AG04449 (cell line): ENCODE measurements at regions of chr20 and their contacts with region 1.

Region 1: DNA sequence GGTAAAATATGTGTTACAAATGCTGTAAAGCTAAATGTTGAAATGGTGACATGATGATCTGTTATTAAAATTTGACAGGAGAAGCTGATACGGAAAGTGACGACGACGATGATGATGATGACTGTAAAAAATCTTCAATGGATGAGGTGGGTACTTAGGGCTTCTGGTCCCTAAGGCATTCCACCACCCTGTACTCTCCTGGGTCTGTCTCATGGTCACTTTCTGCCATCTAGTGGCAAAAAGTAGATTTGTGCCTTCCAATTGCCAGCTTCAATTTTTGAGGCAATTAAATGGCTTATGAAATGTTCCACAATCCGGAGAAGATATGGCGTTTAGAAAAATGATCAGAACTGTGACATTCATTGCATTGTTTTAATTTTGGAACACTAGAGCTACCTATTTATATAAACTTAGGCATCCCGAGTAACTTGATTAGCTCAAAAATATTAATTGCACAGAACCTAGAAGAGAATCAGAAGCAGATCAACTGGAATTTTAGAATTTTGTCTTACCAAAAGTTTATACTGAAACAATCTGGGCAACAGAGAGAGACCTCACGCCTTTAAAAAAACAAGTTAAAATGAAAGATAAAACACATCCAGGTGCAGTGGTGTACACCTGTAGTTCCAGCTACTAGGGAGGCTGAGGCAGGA is 346.5 kb upstream of the PLCB4 start:
- DNase-seq: no peak
- H3K4me3 ChIP-seq: no peak overlapping the region
- CTCF ChIP-seq: peak; percentile 64

Region 2: DNA sequence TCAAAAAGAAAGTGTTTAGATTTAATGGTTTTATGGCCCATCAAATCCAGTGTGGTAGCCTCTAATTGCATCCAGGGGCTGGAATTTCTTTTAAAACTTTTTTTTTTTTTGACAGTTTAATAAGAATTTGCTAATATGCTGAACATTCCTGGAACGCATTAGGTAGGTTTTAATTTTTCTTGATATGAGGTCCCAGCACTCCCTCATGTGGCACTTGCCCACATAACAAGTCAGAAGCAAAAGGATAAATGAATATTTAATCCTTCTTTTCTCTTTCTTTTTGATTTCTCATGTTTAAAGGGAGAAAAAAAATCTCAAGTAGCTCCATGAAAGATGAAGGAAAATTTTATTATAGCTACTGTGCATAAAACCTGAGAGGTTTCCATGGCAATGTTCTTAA is 795.6 kb before region 1 on chr20:
- CTCF ChIA-PET with region 1: interaction called, 290 read pairs
- POLR2A ChIA-PET with region 1: no interaction called
- DNase-seq: peak; percentile 10
- H3K4me3 ChIP-seq: no peak overlapping the region
- CTCF ChIP-seq: peak; percentile 45

Region 3: DNA sequence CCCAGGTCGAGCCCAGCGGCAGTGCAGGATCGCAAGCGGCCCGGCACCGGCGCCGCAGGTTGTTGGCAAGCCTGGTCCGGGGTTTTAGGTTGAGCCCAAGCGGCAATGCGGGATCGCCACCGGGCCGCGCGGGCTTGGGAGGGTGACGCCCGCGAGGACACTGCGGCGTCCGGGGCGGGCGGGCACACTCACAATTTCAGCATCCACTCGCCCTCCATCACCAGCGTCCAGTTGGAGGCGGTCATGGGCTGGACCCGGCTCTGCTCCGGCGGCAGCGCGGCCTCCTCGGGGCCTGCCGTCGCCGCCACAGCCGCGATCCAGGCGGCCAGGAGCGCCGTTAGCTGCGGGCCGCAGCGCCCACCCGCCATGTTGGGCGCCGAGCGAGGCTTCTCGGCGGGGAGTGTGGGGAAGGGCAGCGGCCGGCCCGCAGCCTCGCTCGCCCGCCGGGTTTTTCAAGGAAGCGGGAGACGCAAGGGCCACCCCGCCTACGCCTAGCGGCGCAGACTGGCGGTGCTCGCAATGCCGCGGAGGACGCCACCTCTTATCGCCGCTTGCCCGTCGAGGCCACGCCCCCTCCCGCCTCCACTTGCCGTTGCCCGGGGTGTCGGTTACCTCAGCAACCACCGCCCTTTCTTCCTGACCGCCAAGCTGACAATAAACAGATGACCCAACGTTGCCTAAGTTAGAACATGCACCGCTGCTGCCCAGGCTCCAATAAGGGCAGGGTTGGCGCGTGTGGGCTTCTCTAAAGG is 703.0 kb before region 1 on chr20 and contains the start of gene TMX4:
- CTCF ChIA-PET with region 1: interaction called, 49 read pairs
- POLR2A ChIA-PET with region 1: no interaction called
- DNase-seq: peak; percentile 50
- H3K4me3 ChIP-seq: peak within 1 kb of the TSS; percentile 76
- CTCF ChIP-seq: peak; percentile 50

Region 4: DNA sequence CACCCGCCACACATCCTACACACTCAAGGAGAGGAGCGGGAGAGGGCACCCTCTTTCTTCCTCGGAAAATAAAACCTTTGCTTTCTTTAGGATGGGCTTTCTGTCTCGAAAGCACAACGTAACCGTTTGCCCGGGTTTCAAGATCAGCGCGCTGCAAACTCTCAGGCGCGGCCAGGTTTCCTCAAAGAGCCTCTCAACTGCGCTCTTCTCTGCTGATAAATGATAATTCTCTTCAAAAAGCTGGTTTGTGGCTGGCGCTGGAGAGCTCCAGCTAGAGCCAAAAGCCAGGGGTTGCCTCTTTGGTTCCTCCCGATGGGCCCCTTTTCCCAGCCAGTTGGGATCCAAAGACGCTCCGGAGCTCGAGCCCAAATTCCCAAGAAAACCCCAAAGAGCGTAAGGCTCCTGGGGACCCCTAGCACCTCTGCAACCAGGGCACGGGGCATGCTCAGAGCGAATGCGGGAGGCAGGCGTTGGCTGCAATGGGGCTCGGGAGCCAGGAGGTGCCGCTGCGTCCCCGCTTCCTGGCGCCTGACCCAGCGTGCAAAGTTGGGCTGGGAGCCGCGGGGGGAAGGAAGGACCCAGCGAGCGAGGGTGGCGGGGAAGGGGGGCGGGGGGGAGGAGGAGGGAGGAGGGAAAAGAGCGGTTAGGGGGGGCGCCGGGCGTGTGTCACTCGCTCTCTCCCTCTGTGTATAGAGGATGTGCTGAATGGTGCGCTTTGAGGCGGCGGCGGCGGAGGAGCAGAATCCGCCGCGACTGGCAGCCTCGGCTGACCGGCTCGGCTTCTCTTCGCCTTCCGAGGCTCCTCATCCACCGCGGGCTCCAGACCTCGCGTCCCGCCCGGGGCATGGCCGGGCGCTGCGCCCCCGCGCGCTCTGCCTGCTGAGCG is 590.6 kb before region 1 on chr20 and contains the start of gene PLCB1:
- CTCF ChIA-PET with region 1: interaction called, 181 read pairs
- POLR2A ChIA-PET with region 1: no interaction called
- DNase-seq: no peak
- H3K4me3 ChIP-seq: peak within 1 kb of the TSS; percentile 76
- CTCF ChIP-seq: peak; percentile 99

Region 5: GRCh38 chr20:8389381-8390036 is 332.9 kb before region 1 on chr20:
- CTCF ChIA-PET with region 1: interaction called, 102 read pairs
- POLR2A ChIA-PET with region 1: interaction called, 3 read pairs
- DNase-seq: no peak
- H3K4me3 ChIP-seq: no peak overlapping the region
- CTCF ChIP-seq: no peak

Region 6: DNA sequence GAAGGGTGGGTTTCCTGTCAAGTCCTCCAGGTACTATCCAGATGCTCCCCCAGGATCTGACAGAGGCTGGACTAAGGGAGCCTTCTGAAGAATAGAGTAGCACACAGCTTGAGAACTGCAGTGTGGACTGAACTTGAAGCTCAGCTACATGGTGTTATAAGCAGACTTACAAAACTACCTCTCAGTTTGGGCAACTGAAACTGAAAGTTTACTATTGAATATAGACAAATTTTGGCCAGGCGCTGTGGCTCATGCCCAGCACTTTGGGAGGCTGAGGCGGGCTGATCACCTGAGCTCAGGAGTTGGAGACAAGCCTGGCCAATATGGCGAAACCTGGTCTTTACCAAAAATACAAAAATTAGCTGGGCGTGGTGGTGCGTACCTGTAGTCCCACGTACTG is 241.8 kb before region 1 on chr20:
- CTCF ChIA-PET with region 1: interaction called, 12 read pairs
- POLR2A ChIA-PET with region 1: no interaction called
- DNase-seq: no peak
- H3K4me3 ChIP-seq: no peak overlapping the region
- CTCF ChIP-seq: no peak

Region 7: DNA sequence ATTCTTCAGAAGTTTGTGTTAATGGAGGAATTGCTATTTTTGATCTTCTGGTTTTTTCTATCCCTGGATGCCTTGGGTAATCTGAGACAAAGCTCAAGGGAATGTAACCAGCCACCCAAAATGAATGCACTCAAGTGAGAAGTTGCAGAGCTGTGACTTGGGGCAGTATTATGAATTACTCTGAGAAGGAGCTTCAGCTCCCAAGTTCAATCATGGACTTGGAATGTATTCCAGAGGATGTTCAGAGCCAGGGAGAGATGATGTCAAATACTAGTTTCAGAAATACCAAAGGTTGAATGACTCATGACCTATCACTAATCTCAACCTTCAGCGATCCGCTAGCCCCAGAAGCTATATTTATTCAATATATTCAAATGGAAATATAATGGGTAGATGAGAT is 28.7 kb before region 1 on chr20:
- CTCF ChIA-PET with region 1: interaction called, 30 read pairs
- POLR2A ChIA-PET with region 1: no interaction called
- DNase-seq: peak; percentile 83
- H3K4me3 ChIP-seq: no peak overlapping the region
- CTCF ChIP-seq: no peak

Region 8: DNA sequence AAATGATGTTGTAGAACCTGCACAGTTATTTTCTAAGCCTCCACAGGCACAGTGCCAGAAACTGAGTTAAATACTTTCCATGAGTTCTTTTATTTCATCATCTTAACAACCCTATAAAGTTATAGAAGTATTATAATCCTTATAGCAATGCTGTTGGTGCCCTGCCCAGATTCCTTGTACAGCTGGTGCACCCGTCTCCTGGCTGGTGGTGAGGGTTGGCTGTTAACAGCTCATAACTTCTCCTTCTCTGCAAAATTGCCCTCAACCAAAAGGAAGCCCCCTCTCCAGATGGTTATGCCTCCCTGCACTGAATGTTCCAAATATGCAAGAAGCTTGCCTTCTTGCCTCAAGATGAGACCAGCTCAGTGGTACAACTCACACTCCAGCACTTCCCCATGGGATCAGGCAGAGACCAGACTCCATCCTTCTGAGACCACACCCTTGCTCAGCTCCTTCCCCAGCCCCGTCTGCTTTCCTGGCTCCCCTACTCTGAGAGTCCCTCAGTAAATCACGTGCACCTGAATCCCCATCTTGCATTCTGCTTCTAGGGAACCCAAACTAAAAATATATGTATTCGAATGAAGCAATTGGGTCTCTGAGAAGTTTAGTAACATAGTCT is 42.1 kb after region 1 on chr20:
- CTCF ChIA-PET with region 1: no interaction called
- POLR2A ChIA-PET with region 1: no interaction called
- DNase-seq: no peak
- H3K4me3 ChIP-seq: no peak overlapping the region
- CTCF ChIP-seq: no peak